B cell (primary cell): ENCODE measurements at regions of chr10 and their contacts with region 1.

Region 1: DNA sequence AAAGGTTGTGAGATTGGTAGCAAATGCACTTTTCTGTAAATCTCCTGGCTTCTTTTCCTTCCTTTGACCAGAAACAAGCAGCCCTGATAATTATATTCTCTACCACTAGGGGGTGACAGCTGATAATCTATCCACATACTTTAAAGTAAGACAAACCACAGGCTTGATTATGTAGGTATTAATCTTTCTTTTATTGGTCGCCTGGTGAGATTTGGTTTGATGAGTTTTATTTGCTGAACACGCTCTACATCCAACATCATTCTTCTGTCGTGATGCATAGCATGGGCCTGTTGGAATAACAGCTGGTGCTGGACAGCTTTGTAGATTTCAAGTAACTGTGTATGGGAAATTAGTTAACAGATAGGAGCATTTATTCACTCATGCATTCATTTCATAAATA is 63.5 kb downstream of the ZNF365 start:
- DNase-seq: peak; percentile 81
- ATAC-seq: peak; percentile 78
- H3K4me3 ChIP-seq: no peak overlapping the region
- H3K4me3 Mint-ChIP-seq: no peak overlapping the region
- H3K27ac ChIP-seq: no peak overlapping the region
- H3K27ac Mint-ChIP-seq: no peak overlapping the region
- H3K4me1 ChIP-seq: no peaks in the 10 kb centered on the region
- H3K4me1 Mint-ChIP-seq: peaks cover 3% of the 10 kb centered on the region
- H3K27me3 ChIP-seq: peaks cover 0 to 7% (median 2%) of the 10 kb centered on the region in 4 experiments
- H3K27me3 Mint-ChIP-seq: peaks cover 10% of the 10 kb centered on the region
- CTCF ChIP-seq: peak; percentile 93

Region 2: DNA sequence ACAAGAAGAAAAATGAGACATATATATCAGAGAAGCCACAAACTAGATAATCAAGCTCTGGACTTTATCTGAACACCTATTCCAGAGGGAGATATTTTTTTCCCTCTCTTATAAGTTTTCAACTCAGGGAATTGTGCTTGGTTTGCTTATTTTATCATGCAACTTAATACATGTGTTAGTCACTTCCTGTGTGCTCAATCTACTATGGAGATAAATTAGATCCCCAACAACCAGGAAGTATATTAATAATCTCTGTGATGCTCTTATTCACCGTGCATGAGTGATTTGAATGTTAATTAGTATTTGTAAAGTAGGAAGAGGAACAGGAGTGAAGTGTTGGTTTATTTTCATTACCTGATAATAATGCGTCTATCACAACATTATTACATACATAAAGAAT is 102.4 kb before region 1 on chr10:
- CTCF ChIA-PET with region 1: no interaction called
- POLR2A ChIA-PET with region 1: no interaction called
- intact Hi-C with region 1: no loop called
- DNase-seq: peak; percentile 42
- ATAC-seq: no peak
- H3K4me3 ChIP-seq: no peak overlapping the region
- H3K4me3 Mint-ChIP-seq: peak overlapping the region; percentile 12
- H3K27ac ChIP-seq: no peak overlapping the region
- H3K27ac Mint-ChIP-seq: peak overlapping the region; percentile 42
- H3K4me1 ChIP-seq: peaks cover 16 to 34% of the 10 kb centered on the region in 2 donors
- H3K4me1 Mint-ChIP-seq: peaks cover 28% of the 10 kb centered on the region
- H3K27me3 ChIP-seq: no peaks in the 10 kb centered on the region
- H3K27me3 Mint-ChIP-seq: no peaks in the 10 kb centered on the region
- CTCF ChIP-seq: no peak

Region 3: GRCh38 chr10:62352356-62352970 is 85.2 kb before region 1 on chr10:
- CTCF ChIA-PET with region 1: no interaction called
- POLR2A ChIA-PET with region 1: no interaction called
- intact Hi-C with region 1: no loop called
- DNase-seq: no peak
- ATAC-seq: no peak
- H3K4me3 ChIP-seq: no peak overlapping the region
- H3K4me3 Mint-ChIP-seq: no peak overlapping the region
- H3K27ac ChIP-seq: no peak overlapping the region
- H3K27ac Mint-ChIP-seq: no peak overlapping the region
- H3K4me1 ChIP-seq: no peaks in the 10 kb centered on the region
- H3K4me1 Mint-ChIP-seq: no peaks in the 10 kb centered on the region
- H3K27me3 ChIP-seq: peaks cover 0 to 3% (median 1%) of the 10 kb centered on the region in 4 experiments
- H3K27me3 Mint-ChIP-seq: peaks cover 14% of the 10 kb centered on the region
- CTCF ChIP-seq: no peak

Region 4: DNA sequence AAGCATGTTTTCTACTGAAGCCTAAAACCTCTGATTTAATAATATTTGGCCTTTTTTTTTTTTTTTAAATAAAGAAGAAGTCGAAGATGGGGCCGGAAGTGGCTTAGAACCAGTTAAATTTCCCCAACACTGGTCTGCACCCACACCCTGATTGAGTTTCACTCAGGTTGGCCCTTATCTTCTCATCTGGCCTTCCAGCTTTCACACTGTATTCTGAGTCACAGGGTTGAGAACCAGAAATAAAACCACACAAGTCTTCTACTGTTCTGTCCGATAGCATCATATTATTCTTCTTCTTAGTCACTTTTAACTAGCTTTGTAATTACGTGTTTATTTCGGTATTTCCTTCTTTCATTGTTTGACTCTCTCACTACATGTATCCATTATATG is 53.6 kb before region 1 on chr10:
- CTCF ChIA-PET with region 1: no interaction called
- POLR2A ChIA-PET with region 1: no interaction called
- intact Hi-C with region 1: no loop called
- DNase-seq: no peak
- ATAC-seq: no peak
- H3K4me3 ChIP-seq: no peak overlapping the region
- H3K4me3 Mint-ChIP-seq: no peak overlapping the region
- H3K27ac ChIP-seq: no peak overlapping the region
- H3K27ac Mint-ChIP-seq: no peak overlapping the region
- H3K4me1 ChIP-seq: no peaks in the 10 kb centered on the region
- H3K4me1 Mint-ChIP-seq: no peaks in the 10 kb centered on the region
- H3K27me3 ChIP-seq: peaks cover 0 to 5% (median 2%) of the 10 kb centered on the region in 4 experiments
- H3K27me3 Mint-ChIP-seq: peaks cover 4% of the 10 kb centered on the region
- CTCF ChIP-seq: no peak

Region 5: DNA sequence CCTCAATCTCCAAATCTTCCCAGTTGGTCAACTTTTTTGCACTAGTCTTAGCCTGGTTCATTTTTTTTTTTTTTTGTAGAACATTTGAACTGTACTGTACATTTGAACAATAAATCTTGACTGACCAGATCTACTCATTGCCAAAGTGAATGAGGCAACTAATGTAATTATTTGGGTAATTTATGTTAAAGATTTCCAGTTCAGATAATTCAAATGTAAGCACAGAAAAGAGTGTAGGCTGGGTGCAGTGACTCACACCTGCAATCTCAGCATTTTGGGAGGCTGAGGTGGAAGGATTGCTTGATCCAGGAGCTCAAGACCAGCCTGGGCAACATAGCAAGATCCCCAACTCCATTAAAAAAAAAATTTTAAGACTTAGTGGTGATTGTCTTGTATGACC is 12.1 kb after region 1 on chr10:
- CTCF ChIA-PET with region 1: interaction called, 81 read pairs
- POLR2A ChIA-PET with region 1: no interaction called
- intact Hi-C with region 1: no loop called
- DNase-seq: no peak
- ATAC-seq: no peak
- H3K4me3 ChIP-seq: no peak overlapping the region
- H3K4me3 Mint-ChIP-seq: no peak overlapping the region
- H3K27ac ChIP-seq: no peak overlapping the region
- H3K27ac Mint-ChIP-seq: no peak overlapping the region
- H3K4me1 ChIP-seq: peaks cover 15 to 17% of the 10 kb centered on the region in 2 donors
- H3K4me1 Mint-ChIP-seq: peaks cover 19% of the 10 kb centered on the region
- H3K27me3 ChIP-seq: peaks cover 0 to 2% (median 0%) of the 10 kb centered on the region in 4 experiments
- H3K27me3 Mint-ChIP-seq: no peaks in the 10 kb centered on the region
- CTCF ChIP-seq: no peak

Region 6: DNA sequence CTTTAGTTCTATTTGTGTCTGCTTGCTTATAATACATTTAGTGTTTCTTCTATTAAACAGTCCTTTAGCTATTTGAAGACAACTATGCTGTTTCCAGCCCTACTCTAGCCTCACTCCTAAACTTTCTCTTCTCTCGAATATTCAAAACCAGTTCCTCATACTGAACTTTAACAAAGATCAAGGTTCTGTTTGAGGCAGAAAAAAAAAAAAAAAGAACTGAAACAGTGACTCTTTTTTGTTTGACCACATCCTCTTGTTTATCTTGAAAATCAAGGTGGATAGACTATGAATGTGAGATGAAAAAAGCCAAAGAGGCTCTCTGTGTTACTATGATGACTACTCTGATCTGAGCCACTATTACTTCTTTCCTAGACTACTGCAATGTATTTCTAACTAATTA is 90.7 kb after region 1 on chr10:
- CTCF ChIA-PET with region 1: interaction called, 12 read pairs
- POLR2A ChIA-PET with region 1: no interaction called
- intact Hi-C with region 1: no loop called
- DNase-seq: peak; percentile 77
- ATAC-seq: peak; percentile 64
- H3K4me3 ChIP-seq: peak overlapping the region in 1 of 5 experiments; percentile 38
- H3K4me3 Mint-ChIP-seq: peak overlapping the region; percentile 66
- H3K27ac ChIP-seq: peak overlapping the region; percentile 84 to 90
- H3K27ac Mint-ChIP-seq: peak overlapping the region; percentile 96
- H3K4me1 ChIP-seq: peaks cover 47 to 51% of the 10 kb centered on the region in 2 donors
- H3K4me1 Mint-ChIP-seq: peaks cover 62% of the 10 kb centered on the region
- H3K27me3 ChIP-seq: no peaks in the 10 kb centered on the region
- H3K27me3 Mint-ChIP-seq: no peaks in the 10 kb centered on the region
- CTCF ChIP-seq: no peak

Region 7: DNA sequence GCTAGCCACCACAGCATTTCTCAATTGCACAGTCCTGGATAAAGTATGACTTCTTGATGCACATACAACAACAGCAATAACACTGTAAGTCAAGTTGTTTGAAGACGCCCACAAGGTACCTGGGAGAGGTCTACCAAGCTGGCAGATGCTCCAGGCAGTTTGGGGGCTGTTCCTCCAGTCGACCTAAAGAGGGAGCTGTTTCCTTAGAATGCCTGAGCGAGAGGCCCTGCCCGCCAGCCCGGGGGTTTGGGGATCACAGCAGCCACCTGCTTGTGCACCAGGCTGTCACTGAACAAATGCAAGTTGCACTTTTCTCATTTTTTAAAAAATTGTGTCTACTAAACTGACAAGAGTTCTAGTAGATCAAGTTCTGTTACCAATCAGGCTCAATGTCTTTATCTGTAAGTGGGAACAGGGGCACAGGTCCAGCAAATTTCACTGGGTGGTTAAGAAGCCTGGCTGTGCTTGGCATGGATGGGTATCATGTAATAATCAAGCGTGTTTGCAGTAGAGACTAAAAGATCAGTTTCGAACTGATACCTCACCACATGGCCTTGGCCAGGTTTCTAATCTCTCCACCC is 173.0 kb after region 1 on chr10:
- CTCF ChIA-PET with region 1: interaction called, 47 read pairs
- POLR2A ChIA-PET with region 1: no interaction called
- intact Hi-C with region 1: no loop called
- DNase-seq: peak; percentile 87
- ATAC-seq: peak; percentile 97
- H3K4me3 ChIP-seq: no peak overlapping the region
- H3K4me3 Mint-ChIP-seq: no peak overlapping the region
- H3K27ac ChIP-seq: no peak overlapping the region
- H3K27ac Mint-ChIP-seq: no peak overlapping the region
- H3K4me1 ChIP-seq: peaks cover 5% of the 10 kb centered on the region in 2 donors
- H3K4me1 Mint-ChIP-seq: peaks cover 12% of the 10 kb centered on the region
- H3K27me3 ChIP-seq: no peaks in the 10 kb centered on the region
- H3K27me3 Mint-ChIP-seq: no peaks in the 10 kb centered on the region
- CTCF ChIP-seq: peak; percentile 86

Region 8: DNA sequence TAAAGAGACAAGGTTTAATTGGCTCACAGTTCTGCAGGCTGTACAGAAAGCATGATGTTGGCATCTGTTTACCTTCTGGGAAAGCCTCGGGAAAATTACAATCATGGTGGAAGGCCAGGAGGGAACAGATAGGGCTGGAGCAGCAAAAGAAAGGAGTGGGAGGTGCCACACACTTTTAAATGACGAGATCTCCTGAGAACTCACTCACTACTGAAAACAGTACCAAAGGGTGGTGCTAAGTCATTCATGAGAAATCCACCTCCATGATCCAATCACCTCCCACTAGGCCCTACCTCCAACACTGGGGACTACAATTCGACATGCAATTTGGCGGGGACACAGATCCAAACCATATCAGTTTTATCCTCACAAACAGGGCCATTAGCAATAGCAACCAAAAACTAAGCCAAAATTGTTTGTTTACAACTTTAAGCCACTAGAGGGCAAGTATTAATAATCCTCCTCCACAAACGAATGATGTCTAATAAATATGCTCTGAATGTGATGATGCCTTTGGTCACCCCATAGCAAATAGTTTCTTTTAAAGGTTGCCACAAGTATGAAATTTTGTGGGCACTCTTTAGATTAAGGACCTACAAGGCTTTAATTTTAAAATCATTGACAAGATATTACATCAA is 566.2 kb after region 1 on chr10:
- CTCF ChIA-PET with region 1: no interaction called
- POLR2A ChIA-PET with region 1: no interaction called
- intact Hi-C with region 1: loop called (anchors 10 kb)
- DNase-seq: peak; percentile 14
- ATAC-seq: no peak
- H3K4me3 ChIP-seq: no peak overlapping the region
- H3K4me3 Mint-ChIP-seq: no peak overlapping the region
- H3K27ac ChIP-seq: no peak overlapping the region
- H3K27ac Mint-ChIP-seq: no peak overlapping the region
- H3K4me1 ChIP-seq: no peaks in the 10 kb centered on the region
- H3K4me1 Mint-ChIP-seq: no peaks in the 10 kb centered on the region
- H3K27me3 ChIP-seq: no peaks in the 10 kb centered on the region
- H3K27me3 Mint-ChIP-seq: peaks cover 9% of the 10 kb centered on the region
- CTCF ChIP-seq: peak; percentile 60

Region 9: GRCh38 chr10:63166742-63167258 is 729.1 kb after region 1 on chr10:
- CTCF ChIA-PET with region 1: interaction called, 13 read pairs
- POLR2A ChIA-PET with region 1: no interaction called
- intact Hi-C with region 1: no loop called
- DNase-seq: peak; percentile 74
- ATAC-seq: peak; percentile 84
- H3K4me3 ChIP-seq: no peak overlapping the region
- H3K4me3 Mint-ChIP-seq: no peak overlapping the region
- H3K27ac ChIP-seq: no peak overlapping the region
- H3K27ac Mint-ChIP-seq: no peak overlapping the region
- H3K4me1 ChIP-seq: no peaks in the 10 kb centered on the region
- H3K4me1 Mint-ChIP-seq: peaks cover 2% of the 10 kb centered on the region
- H3K27me3 ChIP-seq: no peaks in the 10 kb centered on the region
- H3K27me3 Mint-ChIP-seq: no peaks in the 10 kb centered on the region
- CTCF ChIP-seq: peak; percentile 83